Heart left ventricle (tissue), 16 donors: ENCODE measurements at regions of chr7 and their contacts with region 1.

Region 1: GRCh38 chr7:47045207-47046051 is 536.5 kb downstream of the TNS3 start:
- DNase-seq: peak; percentile 40 to 81 (median 63)
- ATAC-seq: peak; percentile 68 to 83 (median 78)
- H3K4me3 ChIP-seq: no peak overlapping the region
- H3K27ac ChIP-seq: peak overlapping the region; percentile 21 to 82 (median 64)
- H3K4me1 ChIP-seq: peaks cover 3 to 49% (median 31%) of the 10 kb centered on the region in 12 donors
- H3K27me3 ChIP-seq: no peaks in the 10 kb centered on the region
- CTCF ChIP-seq: no peak
- POLR2A ChIP-seq: no peak

Region 2: DNA sequence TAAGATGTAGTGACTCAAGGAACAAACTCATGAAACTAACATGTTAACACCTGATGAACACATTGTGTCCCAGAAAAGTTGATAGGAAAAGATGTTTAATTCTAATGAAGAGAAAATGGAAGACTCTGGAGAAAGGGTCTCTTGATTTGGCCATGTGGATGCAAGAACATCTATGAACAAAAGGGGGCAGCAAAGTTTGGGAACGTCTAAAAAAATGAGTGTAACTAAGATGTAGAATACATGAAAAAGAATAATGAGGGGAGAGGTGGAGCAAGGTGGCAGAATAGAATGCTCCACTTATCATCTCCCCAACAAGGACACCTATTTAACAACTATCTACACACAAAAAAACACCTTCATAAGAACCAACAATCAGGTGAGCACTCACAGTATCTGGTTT is 268.6 kb before region 1 on chr7:
- intact Hi-C with region 1: loop called in 1 of 10 experiments (anchors 10 kb)
- DNase-seq: no peak
- ATAC-seq: no peak
- H3K4me3 ChIP-seq: no peak overlapping the region
- H3K27ac ChIP-seq: no peak overlapping the region
- H3K4me1 ChIP-seq: peaks cover 0 to 31% (median 15%) of the 10 kb centered on the region in 12 donors
- H3K27me3 ChIP-seq: no peaks in the 10 kb centered on the region
- CTCF ChIP-seq: peak in 11 of 12 donors; percentile 27 to 63 (median 52)
- POLR2A ChIP-seq: no peak

Region 3: GRCh38 chr7:46809881-46810280 is 235.5 kb before region 1 on chr7:
- intact Hi-C with region 1: loop called in 1 of 10 experiments (anchors 10 kb)
- DNase-seq: peak in 1 of 5 donors; percentile 29
- ATAC-seq: no peak
- H3K4me3 ChIP-seq: no peak overlapping the region
- H3K27ac ChIP-seq: no peak overlapping the region
- H3K4me1 ChIP-seq: peaks cover 0 to 27% (median 12%) of the 10 kb centered on the region in 12 donors
- H3K27me3 ChIP-seq: no peaks in the 10 kb centered on the region
- CTCF ChIP-seq: no peak
- POLR2A ChIP-seq: no peak

Region 4: GRCh38 chr7:46972205-46972604 is 73.2 kb before region 1 on chr7:
- intact Hi-C with region 1: loop called in 1 of 10 experiments (anchors 10 kb)
- DNase-seq: no peak
- ATAC-seq: no peak
- H3K4me3 ChIP-seq: no peak overlapping the region
- H3K27ac ChIP-seq: no peak overlapping the region
- H3K4me1 ChIP-seq: no peaks in the 10 kb centered on the region
- H3K27me3 ChIP-seq: no peaks in the 10 kb centered on the region
- CTCF ChIP-seq: no peak
- POLR2A ChIP-seq: no peak

Region 5: DNA sequence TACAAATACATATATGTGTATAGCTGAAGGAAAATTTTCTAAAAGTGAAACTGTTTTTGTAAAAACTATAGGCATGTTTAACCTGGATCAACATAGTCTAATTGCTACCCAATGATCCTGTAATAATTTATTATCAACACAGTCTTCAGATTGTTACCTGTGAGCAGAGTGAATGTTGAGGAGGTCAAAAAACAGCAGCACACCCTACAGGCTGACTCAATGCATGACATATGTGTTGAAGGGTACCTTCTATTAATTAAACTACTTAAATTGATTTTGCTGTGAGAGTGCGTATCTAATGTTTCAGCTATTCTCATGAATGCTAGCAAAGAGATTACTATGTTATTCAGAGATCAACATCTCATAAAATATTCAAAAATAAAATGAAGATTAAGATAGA is 125.1 kb after region 1 on chr7:
- intact Hi-C with region 1: no loop called
- DNase-seq: no peak
- ATAC-seq: no peak
- H3K4me3 ChIP-seq: no peak overlapping the region
- H3K27ac ChIP-seq: no peak overlapping the region
- H3K4me1 ChIP-seq: no peaks in the 10 kb centered on the region
- H3K27me3 ChIP-seq: no peaks in the 10 kb centered on the region
- CTCF ChIP-seq: peak in 3 of 12 donors; percentile 6 to 25 (median 14)
- POLR2A ChIP-seq: no peak

Region 6: DNA sequence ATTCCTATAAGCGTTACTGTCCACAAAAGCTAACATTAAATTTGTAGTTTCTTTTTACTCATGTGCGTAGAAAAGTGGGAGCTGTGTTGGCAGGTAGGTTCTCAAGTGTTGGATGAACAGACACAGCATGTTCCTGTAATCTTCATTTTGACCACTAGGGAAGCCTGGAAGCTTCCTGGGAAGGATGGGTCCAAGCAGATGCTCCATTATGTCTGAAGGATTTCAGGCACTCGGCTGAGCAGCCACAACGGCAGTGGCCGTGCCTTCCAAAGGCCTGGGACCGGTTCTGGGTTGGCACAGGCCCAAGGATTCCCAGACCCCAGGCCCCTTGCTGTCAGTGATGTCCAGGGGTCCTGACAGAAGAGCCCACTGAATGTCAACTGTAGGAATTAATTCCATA is 150.2 kb after region 1 on chr7:
- intact Hi-C with region 1: no loop called
- DNase-seq: no peak
- ATAC-seq: no peak
- H3K4me3 ChIP-seq: no peak overlapping the region
- H3K27ac ChIP-seq: no peak overlapping the region
- H3K4me1 ChIP-seq: peaks cover 0 to 19% (median 4%) of the 10 kb centered on the region in 12 donors
- H3K27me3 ChIP-seq: no peaks in the 10 kb centered on the region
- CTCF ChIP-seq: peak in 3 of 12 donors; percentile 10 to 28 (median 26)
- POLR2A ChIP-seq: no peak

Region 7: GRCh38 chr7:47239931-47240421 is 194.5 kb after region 1 on chr7:
- intact Hi-C with region 1: no loop called
- DNase-seq: no peak
- ATAC-seq: no peak
- H3K4me3 ChIP-seq: no peak overlapping the region
- H3K27ac ChIP-seq: peak overlapping the region in 3 of 12 donors; percentile 20 to 33 (median 26)
- H3K4me1 ChIP-seq: peaks cover 0 to 18% (median 2%) of the 10 kb centered on the region in 12 donors
- H3K27me3 ChIP-seq: no peaks in the 10 kb centered on the region
- CTCF ChIP-seq: no peak
- POLR2A ChIP-seq: no peak